OCI-LY7 (cell line): ENCODE measurements at regions of chr16 and their contacts with region 1.

Region 1: DNA sequence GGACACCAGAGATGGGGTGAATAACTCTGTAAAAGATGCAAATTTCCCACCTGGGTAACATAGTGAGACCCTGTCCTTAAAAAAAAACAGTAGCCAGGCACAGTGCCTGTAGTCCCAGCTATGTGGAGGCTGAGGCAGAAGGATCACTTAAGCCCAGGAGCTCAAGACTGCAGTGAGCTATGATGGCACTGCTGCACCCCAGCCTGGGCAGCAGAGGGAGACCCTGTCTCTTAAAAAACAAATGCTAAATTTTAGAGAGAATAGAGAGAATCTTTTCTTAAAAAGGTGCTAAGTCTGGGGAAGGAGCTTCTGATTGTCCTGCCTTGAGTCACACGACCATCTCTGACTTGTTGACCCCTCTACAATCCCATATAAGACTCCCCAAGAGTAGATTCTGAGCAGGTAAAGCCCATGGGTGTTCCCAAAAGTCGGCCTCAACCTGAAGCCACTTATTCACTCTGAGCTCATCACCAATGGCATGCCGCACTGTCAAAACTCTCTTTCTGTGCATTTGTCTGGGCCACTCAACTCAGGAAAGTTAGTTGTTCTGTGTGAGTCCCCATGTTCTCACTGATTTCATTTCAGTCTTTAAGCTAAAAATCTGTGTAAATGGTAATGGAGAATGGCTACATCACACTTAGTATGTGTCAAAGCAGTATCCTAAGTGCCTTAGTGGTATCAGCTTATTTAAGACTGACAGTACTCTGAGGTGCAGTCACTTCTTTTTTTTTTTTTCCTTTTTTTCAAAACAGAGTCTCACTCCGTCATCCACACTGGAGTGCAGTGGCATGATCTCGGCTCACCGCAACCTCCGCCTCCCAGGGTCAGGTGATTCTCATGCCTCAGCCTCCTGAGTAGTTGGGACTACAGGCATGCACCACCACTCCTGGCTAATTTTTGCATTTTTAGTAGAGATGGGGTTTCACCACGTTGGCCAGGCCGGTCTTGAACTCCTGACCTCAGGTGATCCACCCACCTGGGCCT is 41.6 kb downstream of the PRKCB start:
- DNase-seq: peak; percentile 39
- H3K4me3 ChIP-seq: no peak overlapping the region
- H3K27ac ChIP-seq: no peak overlapping the region
- H3K4me1 ChIP-seq: peaks cover 68% of the 10 kb centered on the region
- CTCF ChIP-seq: peak; percentile 68

Region 2: DNA sequence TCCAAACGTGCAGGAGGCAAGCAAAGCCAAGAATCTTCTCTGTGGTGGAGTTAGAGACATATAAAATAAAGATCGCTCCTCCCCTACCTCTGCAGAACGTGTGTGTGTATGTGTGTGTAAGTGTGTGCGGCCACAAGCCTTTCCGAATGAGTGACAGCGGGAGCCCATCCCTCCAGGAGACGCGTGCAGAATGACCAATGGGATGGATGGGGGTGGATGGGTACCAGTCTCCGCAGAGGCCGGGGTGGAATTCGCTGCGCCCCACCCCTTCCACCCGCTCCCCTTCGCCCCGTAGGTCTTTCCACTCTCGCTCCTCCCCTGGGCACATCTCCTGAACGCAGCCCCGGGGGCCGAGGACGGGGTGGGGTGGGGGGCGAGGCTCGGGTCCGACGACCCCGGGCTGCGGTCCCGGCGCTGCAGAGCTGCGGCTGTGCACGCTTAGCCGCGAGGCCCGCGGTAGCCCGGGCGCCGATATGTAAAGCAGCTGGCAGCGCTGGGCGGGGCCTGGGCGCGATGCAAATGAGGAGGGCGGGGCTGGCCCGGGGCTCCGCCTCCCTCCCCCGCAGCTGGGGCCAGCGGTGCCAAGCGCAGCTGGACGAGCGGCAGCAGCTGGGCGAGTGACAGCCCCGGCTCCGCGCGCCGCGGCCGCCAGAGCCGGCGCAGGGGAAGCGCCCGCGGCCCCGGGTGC is 41.9 kb before region 1 on chr16 and contains the start of gene PRKCB:
- CTCF ChIA-PET with region 1: no interaction called
- POLR2A ChIA-PET with region 1: interaction called, 3 read pairs
- intact Hi-C with region 1: loop called (anchors 5 kb)
- DNase-seq: peak; percentile 92
- H3K4me3 ChIP-seq: peak within 1 kb of the TSS; percentile 85
- H3K27ac ChIP-seq: peak within 1 kb of the TSS; percentile 18
- H3K4me1 ChIP-seq: peaks cover 46% of the 10 kb centered on the region
- CTCF ChIP-seq: no peak
- total RNA-seq, gene PRKCB: 21.0 and 24.2 TPM in 2 replicates

Region 3: GRCh38 chr16:23863511-23864422 is 13.6 kb before region 1 on chr16:
- CTCF ChIA-PET with region 1: interaction called, 3 read pairs
- POLR2A ChIA-PET with region 1: interaction called, 42 read pairs
- intact Hi-C with region 1: no loop called
- DNase-seq: peak; percentile 86
- H3K4me3 ChIP-seq: peak overlapping the region; percentile 65
- H3K27ac ChIP-seq: peak overlapping the region; percentile 98
- H3K4me1 ChIP-seq: peaks cover 86% of the 10 kb centered on the region
- CTCF ChIP-seq: no peak

Region 4: GRCh38 chr16:23896832-23897821 is 19.7 kb after region 1 on chr16:
- CTCF ChIA-PET with region 1: no interaction called
- POLR2A ChIA-PET with region 1: interaction called, 10 read pairs
- intact Hi-C with region 1: no loop called
- DNase-seq: no peak
- H3K4me3 ChIP-seq: no peak overlapping the region
- H3K27ac ChIP-seq: no peak overlapping the region
- H3K4me1 ChIP-seq: peaks cover 10% of the 10 kb centered on the region
- CTCF ChIP-seq: no peak